ENCODE measurements at regions of chr6 and their contacts with region 1.

Region 1: GRCh38 chr6:9540534-9541126 is 874.2 kb downstream of the TFAP2A start:
- DNase-seq: peak; percentile 41
- CTCF ChIP-seq: peak; percentile 64

Region 2: DNA sequence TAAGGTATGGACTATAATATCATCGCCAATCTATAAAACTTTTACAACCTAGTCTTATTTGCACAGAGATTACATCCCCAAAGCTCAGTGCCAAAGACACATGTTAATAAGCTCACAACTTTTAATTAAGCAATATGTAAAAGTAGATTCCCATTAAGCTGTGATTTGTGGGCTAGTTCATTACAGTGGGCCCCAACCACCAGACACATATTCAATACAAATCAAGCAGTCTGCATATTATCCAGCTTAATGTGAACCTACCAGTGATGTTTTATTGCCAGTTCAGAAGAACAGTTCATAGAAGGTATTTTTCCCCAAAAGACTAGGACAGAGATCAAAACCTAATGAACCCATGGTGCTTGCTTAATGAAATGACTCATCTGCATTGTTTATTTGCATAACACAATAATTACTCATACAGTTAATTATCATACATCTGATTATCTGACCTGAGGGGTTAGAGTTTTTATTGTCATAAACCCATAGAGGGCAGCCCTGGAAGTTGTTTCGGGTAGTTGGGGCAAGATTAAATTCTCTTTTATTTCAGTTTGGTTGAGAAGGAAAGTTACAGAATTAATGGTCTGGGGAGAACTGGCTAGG is 43.2 kb after region 1 on chr6:
- in situ Hi-C with region 1: no loop called
- DNase-seq: no peak
- CTCF ChIP-seq: no peak

Region 3: GRCh38 chr6:10404107-10404798 is 863.6 kb after region 1 on chr6:
- in situ Hi-C with region 1: loop called (anchors 25 kb)
- DNase-seq: peak; percentile 99
- CTCF ChIP-seq: peak; percentile 69

Measured in GM13977 (cell line).